HEK293 (cell line): ENCODE measurements at regions of chr2 and their contacts with region 1.

Region 1: DNA sequence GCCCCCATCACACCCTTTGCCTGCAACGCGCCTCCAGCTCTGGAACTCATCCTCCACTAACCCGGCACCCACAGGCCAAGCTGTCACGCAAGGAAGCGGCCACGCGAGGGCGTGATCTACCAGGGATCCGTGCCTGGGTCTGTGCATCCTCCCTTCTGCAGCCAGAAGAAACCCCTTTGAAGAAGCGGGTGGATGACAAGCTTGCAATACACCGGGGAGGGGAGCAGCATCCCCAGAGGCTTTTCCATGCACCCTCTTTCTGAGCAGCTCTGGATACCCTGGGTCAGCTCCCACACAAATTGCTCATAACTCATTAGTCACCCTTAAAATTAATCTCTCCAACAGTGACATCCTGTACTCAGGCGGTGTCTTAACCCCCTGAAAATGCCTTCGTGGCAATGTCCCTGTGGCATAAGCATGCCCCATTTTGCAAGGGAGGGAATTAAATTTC is 47.6 kb downstream of the PDCL3 start:
- H3K4me3 ChIP-seq: no peak overlapping the region
- H3K27ac ChIP-seq: no peak overlapping the region
- H3K4me1 ChIP-seq: no peaks in the 10 kb centered on the region
- CTCF ChIP-seq: peak; percentile 76

Region 2: GRCh38 chr2:100272841-100273329 is 337.5 kb before region 1 on chr2:
- CTCF ChIA-PET with region 1: no interaction called
- POLR2A ChIA-PET with region 1: no interaction called
- H3K4me3 ChIP-seq: no peak overlapping the region
- H3K27ac ChIP-seq: no peak overlapping the region
- H3K4me1 ChIP-seq: no peaks in the 10 kb centered on the region
- CTCF ChIP-seq: no peak

Region 3: GRCh38 chr2:100589527-100589926 is 20.9 kb before region 1 on chr2:
- CTCF ChIA-PET with region 1: interaction called, 16 read pairs
- POLR2A ChIA-PET with region 1: no interaction called
- H3K4me3 ChIP-seq: no peak overlapping the region
- H3K27ac ChIP-seq: no peak overlapping the region
- H3K4me1 ChIP-seq: no peaks in the 10 kb centered on the region
- CTCF ChIP-seq: no peak

Region 4: DNA sequence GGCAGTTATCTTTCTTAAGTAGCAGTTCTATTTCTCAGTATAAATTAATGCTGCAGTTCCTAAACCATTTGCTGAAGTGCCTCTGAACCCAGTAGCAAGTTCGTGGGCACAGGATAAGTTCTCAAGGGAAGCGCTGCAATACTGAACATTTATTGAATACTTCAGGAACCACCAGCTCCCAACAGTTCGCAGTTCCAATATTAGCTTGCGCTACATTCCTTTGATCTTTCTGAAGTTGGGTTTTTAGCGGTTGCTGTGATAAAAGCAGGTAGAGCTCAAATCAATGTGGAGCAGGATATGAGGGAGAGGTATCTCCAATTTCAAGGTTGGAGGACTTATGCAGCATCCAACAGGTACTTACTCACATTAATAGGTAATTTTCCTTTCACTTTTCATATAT is 13.9 kb before region 1 on chr2:
- CTCF ChIA-PET with region 1: interaction called, 16 read pairs
- POLR2A ChIA-PET with region 1: no interaction called
- H3K4me3 ChIP-seq: no peak overlapping the region
- H3K27ac ChIP-seq: no peak overlapping the region
- H3K4me1 ChIP-seq: no peaks in the 10 kb centered on the region
- CTCF ChIP-seq: no peak

Region 5: GRCh38 chr2:100730346-100730745 is 119.9 kb after region 1 on chr2:
- CTCF ChIA-PET with region 1: interaction called, 12 read pairs
- POLR2A ChIA-PET with region 1: no interaction called
- H3K4me3 ChIP-seq: no peak overlapping the region
- H3K27ac ChIP-seq: no peak overlapping the region
- H3K4me1 ChIP-seq: no peaks in the 10 kb centered on the region
- CTCF ChIP-seq: no peak

Region 6: DNA sequence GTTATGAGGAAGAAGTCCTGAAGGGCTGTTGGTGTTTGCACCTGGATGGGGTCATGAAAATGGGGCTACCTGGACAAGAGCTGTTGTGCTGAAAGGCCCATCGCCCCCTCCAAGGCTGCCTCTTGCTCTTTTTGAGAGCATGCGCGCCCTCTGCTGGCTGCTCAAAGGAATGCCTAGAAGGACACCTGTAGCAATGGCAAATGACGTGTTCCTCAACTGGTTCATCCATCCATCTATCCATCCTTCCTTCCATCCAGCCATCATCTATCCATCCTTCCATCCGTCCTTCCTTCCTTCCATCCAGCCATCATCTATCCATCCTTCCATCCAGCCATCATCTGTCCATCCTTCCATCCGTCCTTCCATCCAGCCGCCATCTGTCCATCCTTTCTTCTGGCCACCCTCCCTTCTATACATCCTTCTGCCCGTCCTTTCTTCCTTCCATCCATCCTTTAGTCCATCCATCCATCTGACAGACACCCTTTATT is 374.5 kb after region 1 on chr2:
- CTCF ChIA-PET with region 1: interaction called, 63 read pairs
- POLR2A ChIA-PET with region 1: no interaction called
- H3K4me3 ChIP-seq: no peak overlapping the region
- H3K27ac ChIP-seq: no peak overlapping the region
- H3K4me1 ChIP-seq: no peaks in the 10 kb centered on the region
- CTCF ChIP-seq: peak; percentile 91